HEK293T (cell line): ENCODE measurements at regions of chr6 and their contacts with region 1.

Region 1: DNA sequence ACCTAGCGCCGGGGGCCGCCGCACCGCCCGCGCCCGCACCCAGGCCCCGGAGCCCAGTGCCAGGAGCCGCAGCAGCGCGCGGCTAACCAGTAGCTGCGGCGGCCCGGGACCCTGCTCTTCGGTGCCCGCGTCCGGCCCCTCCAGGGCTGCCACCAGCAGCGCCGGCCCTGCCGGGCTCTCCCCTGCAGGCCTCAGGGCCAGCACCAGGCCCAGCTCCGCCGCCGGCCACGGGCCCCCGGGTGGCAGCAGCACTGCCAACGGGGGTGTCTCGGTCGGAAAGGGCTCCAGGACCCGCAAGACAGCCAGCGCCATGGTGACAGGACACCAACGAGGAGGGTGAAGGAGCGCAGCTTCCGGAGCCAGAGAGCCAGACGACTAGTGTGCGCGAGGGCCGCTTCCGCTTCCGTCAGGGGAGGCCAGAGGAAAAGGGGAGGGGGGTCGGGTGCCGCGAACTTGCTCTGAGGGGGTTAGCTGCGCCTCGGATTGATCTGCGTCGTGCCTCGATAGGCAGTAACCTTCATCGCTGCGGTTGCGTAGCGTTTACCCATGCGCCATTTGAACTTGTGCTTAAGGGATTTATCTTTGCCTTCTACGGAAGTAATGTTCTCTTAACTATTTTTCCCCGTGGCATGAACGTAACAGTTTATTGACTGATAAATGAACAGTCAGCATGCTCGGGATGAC is at the start of gene PEX6:
- DNase-seq: peak; percentile 84

Region 2: GRCh38 chr6:42782622-42783176 is 196.3 kb before region 1 on chr6:
- CTCF ChIA-PET with region 1: no interaction called
- POLR2A ChIA-PET with region 1: no interaction called
- DNase-seq: peak; percentile 66

Region 3: GRCh38 chr6:42963855-42964605 is 15.0 kb before region 1 on chr6:
- CTCF ChIA-PET with region 1: interaction called, 3 read pairs
- POLR2A ChIA-PET with region 1: interaction called, 22 read pairs
- DNase-seq: peak; percentile 76

Region 4: DNA sequence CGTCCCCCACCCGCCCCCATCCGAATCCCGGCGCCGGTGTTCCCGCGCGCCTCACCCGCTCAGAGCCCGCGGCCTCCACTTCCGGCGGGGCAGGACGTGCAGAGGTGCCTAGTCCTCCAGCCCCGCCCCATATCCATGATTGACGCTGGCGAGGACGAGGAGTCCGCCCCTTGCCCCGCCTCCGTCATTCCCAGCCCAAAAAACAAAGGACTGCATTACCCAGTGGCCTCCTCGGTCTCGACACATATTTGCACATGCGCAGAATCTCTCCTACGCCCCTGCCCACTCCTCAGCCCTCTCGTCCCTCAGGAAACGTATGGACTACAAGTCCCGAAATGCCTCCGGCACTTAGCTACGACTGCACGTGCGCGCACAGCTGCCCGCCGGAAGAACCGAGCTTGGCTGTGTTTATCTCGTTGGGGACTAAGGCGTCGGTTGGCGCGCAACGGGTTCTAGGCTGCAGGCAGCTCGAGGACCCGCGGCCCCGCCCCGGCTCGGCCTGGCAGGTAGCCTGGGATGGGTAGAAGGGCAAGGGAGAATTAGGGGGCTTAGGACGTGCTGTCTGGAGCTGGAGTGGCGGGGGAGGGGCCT is 35.0 kb after region 1 on chr6 and contains the starts of genes KLHDC3 and MEA1:
- CTCF ChIA-PET with region 1: no interaction called
- POLR2A ChIA-PET with region 1: interaction called, 78 read pairs
- DNase-seq: peak; percentile 99

Region 5: GRCh38 chr6:43021270-43022047 is 42.5 kb after region 1 on chr6 and contains the start of gene RRP36:
- CTCF ChIA-PET with region 1: no interaction called
- POLR2A ChIA-PET with region 1: interaction called, 19 read pairs
- DNase-seq: peak; percentile 85